GM10248 (cell line): ENCODE measurements at regions of chr9 and their contacts with region 1.

Region 1: GRCh38 chr9:22008736-22009562 is at the start of gene CDKN2B:
- DNase-seq: peak; percentile 91
- CTCF ChIP-seq: peak; percentile 91

Region 2: GRCh38 chr9:21812946-21813568 is 195.9 kb before region 1 on chr9:
- CTCF ChIA-PET with region 1: interaction called, 142 read pairs
- POLR2A ChIA-PET with region 1: no interaction called
- DNase-seq: peak; percentile 62
- CTCF ChIP-seq: peak; percentile 90

Region 3: GRCh38 chr9:21873540-21874221 is 135.3 kb before region 1 on chr9:
- CTCF ChIA-PET with region 1: no interaction called
- POLR2A ChIA-PET with region 1: no interaction called
- DNase-seq: no peak
- CTCF ChIP-seq: no peak

Region 4: DNA sequence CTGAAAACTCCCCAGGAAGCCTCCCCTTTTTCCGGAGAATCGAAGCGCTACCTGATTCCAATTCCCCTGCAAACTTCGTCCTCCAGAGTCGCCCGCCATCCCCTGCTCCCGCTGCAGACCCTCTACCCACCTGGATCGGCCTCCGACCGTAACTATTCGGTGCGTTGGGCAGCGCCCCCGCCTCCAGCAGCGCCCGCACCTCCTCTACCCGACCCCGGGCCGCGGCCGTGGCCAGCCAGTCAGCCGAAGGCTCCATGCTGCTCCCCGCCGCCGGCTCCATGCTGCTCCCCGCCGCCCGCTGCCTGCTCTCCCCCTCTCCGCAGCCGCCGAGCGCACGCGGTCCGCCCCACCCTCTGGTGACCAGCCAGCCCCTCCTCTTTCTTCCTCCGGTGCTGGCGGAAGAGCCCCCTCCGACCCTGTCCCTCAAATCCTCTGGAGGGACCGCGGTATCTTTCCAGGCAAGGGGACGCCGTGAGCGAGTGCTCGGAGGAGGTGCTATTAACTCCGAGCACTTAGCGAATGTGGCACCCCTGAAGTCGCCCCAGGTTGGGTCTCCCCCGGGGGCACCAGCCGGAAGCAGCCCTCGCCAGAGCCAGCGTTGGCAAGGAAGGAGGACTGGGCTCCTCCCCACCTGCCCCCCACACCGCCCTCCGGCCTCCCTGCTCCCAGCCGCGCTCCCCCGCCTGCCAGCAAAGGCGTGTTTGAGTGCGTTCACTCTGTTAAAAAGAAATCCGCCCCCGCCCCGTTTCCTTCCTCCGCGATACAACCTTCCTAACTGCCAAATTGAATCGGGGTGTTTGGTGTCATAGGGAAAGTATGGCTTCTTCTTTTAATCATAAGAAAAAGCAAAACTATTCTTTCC is 34.2 kb before region 1 on chr9:
- CTCF ChIA-PET with region 1: interaction called, 27 read pairs
- POLR2A ChIA-PET with region 1: no interaction called
- DNase-seq: peak; percentile 56
- CTCF ChIP-seq: no peak

Region 5: GRCh38 chr9:22022396-22022795 is 13.4 kb after region 1 on chr9:
- CTCF ChIA-PET with region 1: interaction called, 40 read pairs
- POLR2A ChIA-PET with region 1: no interaction called
- DNase-seq: no peak
- CTCF ChIP-seq: no peak

Region 6: DNA sequence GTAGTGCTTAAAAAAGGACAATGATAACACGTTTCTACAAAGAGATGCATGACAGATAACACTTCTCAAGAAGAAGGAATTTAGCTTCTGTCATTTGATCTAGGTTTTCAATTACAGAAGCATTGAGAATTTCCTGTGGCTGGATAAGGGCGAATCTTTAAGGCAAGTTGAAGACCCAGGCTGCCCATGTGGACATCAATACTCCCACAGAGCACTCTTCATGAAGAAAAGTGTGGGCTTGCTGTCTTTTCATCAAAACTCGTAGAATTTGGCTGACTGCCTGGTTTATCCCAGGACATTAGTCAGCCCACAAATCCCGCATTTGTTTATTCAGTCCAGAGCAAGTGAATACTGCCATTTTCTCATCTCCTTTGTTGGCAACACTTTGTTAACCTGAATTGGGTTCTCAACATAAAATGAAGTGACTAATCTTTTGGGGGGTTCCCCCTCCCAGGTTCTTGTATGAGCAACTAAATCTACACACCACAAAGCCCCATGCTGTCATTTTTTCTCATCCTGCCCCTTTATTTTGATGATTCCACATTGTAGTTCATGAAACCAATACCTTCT is 43.5 kb after region 1 on chr9:
- CTCF ChIA-PET with region 1: interaction called, 10 read pairs
- POLR2A ChIA-PET with region 1: no interaction called
- DNase-seq: no peak
- CTCF ChIP-seq: no peak

Region 7: DNA sequence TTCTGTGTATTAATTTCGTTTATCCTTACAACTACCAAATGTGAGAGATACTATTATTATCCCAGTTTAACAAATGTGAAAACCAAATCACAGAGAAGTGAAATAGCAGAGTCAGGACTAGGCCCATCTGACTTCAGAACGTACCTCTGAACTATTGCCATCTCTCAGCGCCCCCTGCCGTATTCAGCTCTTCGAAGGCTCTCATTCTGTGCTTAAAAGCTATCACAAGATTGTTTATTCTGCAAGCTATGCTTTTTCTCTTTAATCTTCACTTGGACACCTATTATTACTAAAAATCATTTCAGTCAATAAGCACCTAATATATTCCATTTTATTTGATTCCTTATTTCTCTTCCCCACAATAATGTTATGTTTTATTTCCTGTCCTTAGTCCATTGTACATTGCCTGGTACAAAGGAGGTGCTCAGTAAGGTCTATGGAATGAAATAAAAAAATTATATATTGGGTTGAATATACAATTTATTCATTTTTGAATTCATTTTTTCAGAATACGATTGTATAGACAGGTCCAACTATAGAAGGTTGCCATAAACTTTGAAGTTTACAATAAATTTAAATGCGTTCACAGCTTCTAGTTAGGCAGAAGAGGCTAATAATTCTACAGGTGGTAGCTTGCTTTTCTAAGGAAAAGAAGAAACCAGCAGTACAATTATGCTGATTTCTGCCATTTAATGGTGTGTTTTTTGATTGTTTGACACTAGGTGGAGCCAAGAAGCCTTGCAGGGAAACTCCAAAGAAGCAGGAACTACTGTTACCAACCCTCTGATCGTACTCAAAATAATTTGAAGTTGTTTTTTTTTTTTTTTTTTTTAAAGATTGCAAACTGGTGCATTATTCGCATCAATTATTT is 235.4 kb after region 1 on chr9:
- CTCF ChIA-PET with region 1: interaction called, 11 read pairs
- POLR2A ChIA-PET with region 1: no interaction called
- DNase-seq: peak; percentile 14
- CTCF ChIP-seq: peak; percentile 67